Activated CD8-positive, alpha-beta T cell treated with anti-CD3 and anti-CD28 coated beads for 36 hours (primary cell): ENCODE measurements at regions of chr4 and their contacts with region 1.

Region 1: GRCh38 chr4:15681207-15682015 is at the start of gene FAM200B:
- DNase-seq: peak; percentile 100
- ATAC-seq: peak; percentile 97
- H3K4me3 Mint-ChIP-seq: peak within 1 kb of the TSS; percentile 100
- H3K27ac Mint-ChIP-seq: peak within 1 kb of the TSS; percentile 99
- H3K4me1 Mint-ChIP-seq: peaks cover 45% of the 10 kb centered on the region
- H3K27me3 Mint-ChIP-seq: no peaks in the 10 kb centered on the region
- CTCF ChIP-seq: no peak
- total RNA-seq, gene FAM200B: 8.9 to 11.1 TPM

Region 2: DNA sequence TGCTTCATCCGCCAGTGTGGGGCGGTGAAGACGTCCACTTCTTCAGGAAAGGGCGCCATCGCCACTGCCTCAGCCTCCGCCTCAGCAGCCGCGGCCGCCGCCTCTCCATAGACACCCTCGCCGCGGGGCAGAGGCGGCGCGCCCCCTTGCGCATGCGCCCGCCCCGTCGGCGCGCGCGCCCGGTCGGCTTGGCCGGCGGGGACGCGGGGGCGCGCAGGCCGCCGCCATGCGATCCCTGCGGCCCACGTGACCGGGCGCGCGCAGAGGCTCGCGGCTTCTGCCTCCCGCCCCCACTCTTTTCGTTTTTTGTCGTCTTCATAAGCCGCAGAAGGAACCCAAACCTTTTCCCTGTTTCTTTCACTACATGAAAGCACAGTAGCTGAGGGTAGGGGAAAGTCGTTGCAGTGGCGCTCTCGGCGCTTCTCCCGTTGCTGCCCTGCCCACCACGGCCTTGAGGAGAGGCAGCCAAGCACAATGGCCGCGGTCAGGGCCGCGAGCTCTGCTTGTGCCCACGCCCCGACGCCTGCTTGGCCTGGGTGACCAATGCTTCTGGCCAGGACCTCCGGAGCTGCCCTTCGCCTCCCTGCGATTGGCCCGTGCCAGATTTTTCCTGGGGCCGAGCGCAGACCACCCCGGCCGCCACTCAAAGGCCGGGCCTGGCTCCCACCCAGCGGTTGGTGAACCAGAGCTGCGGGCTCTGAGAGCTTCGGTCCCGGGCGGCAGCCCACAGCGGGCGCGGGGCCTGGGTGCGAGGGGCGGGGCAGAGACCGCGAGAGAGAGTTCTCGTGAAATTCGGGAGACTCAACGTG is 26.0 kb before region 1 on chr4 and contains the start of gene FBXL5:
- CTCF ChIA-PET with region 1: interaction called, 5 read pairs
- POLR2A ChIA-PET with region 1: interaction called, 18 read pairs
- intact Hi-C with region 1: no loop called
- DNase-seq: peak; percentile 85
- ATAC-seq: peak; percentile 76
- H3K4me3 Mint-ChIP-seq: peak within 1 kb of the TSS; percentile 99
- H3K27ac Mint-ChIP-seq: peak within 1 kb of the TSS; percentile 97
- H3K4me1 Mint-ChIP-seq: peaks cover 57% of the 10 kb centered on the region
- H3K27me3 Mint-ChIP-seq: no peaks in the 10 kb centered on the region
- CTCF ChIP-seq: no peak
- total RNA-seq, gene FBXL5: 27.5 to 32.2 TPM